ENCODE measurements at regions of chr10 and their contacts with region 1.

Region 1: GRCh38 chr10:120942806-120943413 is 91.7 kb downstream of the WDR11 start:
- DNase-seq: peak; percentile 35
- H3K4me3 ChIP-seq: no peak overlapping the region
- CTCF ChIP-seq: peak; percentile 82

Region 2: DNA sequence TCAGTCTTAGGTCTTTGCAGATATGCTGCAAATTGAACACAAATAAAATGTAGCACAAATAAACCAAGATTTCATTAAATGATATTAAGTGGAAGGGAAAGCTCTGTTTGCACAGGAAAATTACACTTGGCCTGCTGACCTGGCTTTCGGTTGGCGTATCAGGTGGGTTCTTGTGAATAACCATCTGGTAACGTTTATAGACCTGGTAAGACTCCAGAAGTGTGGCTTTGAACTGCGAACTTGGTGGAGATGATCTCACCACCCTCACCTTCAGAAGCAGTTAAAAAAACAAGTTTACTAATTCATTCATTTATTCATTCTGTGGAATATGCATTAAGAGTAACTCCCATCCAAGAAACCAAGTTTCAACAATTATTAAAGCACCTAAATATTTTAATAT is 956.8 kb after region 1 on chr10:
- in situ Hi-C with region 1: loop called (anchors 10 kb)
- DNase-seq: peak; percentile 74
- H3K4me3 ChIP-seq: no peak overlapping the region
- CTCF ChIP-seq: no peak